Activated B cell treated with CpG ODN at 0.5 μM for 24 hours (primary cell): ENCODE measurements at regions of chr2 and their contacts with region 1.

Region 1: GRCh38 chr2:168160897-168161296 is 86.5 kb downstream of the STK39 start:
- DNase-seq: no peak
- ATAC-seq: peak; percentile 40
- H3K4me3 Mint-ChIP-seq: no peak overlapping the region
- H3K27ac Mint-ChIP-seq: no peak overlapping the region
- H3K4me1 Mint-ChIP-seq: peaks cover 9% of the 10 kb centered on the region
- H3K27me3 Mint-ChIP-seq: no peaks in the 10 kb centered on the region
- CTCF ChIP-seq: no peak

Region 2: GRCh38 chr2:168138374-168138773 is 22.5 kb before region 1 on chr2:
- CTCF ChIA-PET with region 1: no interaction called
- POLR2A ChIA-PET with region 1: no interaction called
- intact Hi-C with region 1: no loop called
- DNase-seq: no peak
- ATAC-seq: no peak
- H3K4me3 Mint-ChIP-seq: no peak overlapping the region
- H3K27ac Mint-ChIP-seq: no peak overlapping the region
- H3K4me1 Mint-ChIP-seq: peaks cover 24% of the 10 kb centered on the region
- H3K27me3 Mint-ChIP-seq: no peaks in the 10 kb centered on the region
- CTCF ChIP-seq: no peak

Region 3: DNA sequence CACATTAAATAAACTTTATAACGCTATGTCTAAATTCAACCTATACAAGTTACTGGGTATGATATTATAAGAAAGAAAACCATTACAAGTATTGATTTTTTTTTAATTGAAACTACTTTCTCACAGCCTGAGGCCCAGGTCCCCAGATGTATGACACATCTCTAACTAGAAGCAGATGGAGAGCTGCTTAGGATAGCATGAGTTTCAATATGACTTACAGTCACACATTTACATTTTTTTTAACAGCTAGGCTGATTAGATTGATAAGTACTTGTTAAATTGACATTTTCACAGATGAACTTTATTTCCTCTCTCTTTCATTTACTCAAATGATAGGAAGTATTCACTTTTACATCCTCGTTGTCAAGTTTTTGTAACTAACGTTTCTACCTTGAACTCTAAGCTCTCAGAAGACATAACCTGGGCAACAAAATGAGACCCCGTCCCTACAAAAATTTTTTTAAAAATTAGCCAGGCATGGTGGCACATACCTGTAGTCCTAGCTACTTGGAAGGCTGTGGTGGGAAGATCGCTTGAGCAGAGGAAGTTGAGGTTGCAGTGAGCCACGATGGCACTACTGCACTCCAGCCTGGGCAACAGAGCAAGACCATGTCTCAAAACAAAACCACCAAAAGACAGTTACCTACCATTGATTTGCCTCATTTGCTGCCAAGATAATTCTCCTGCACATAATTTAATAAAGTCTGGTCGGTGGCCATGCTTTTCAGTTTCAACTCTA is 34.1 kb after region 1 on chr2:
- CTCF ChIA-PET with region 1: no interaction called
- POLR2A ChIA-PET with region 1: no interaction called
- intact Hi-C with region 1: loop called (anchors 2 kb)
- DNase-seq: peak; percentile 33
- ATAC-seq: peak; percentile 84
- H3K4me3 Mint-ChIP-seq: peak overlapping the region; percentile 79
- H3K27ac Mint-ChIP-seq: peak overlapping the region; percentile 97
- H3K4me1 Mint-ChIP-seq: peaks cover 53% of the 10 kb centered on the region
- H3K27me3 Mint-ChIP-seq: no peaks in the 10 kb centered on the region
- CTCF ChIP-seq: no peak

Region 4: DNA sequence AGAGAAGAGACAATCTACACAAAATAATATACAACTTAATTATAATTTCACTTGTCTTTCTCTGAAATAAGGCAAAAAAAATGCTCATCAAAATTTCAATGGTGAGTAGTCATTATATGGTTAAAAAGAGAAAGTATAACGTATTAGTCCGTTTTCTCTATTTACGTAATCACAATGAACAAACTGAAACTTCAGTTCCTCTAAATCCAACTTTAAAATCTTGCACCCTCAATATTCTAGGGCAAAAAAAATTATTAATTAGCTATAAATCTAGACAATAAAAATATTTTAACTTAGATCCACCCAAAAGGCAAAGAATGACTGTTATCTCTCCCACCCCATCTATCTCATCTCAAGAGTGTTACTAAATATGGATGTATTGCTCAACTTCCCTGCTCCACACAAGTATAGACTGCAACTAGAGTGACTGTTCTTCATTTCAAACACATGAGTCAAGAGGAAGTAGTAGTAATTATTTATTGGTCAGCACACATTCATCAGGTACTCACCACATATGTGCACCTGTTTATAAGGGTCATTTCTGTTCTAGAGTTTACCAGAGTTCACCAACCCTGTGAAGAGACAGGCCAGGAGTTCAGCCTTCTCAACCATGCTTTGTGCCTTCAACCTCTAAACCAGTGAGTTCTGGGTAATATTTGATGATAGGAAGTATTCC is 50.1 kb after region 1 on chr2:
- CTCF ChIA-PET with region 1: no interaction called
- POLR2A ChIA-PET with region 1: interaction called, 5 read pairs
- intact Hi-C with region 1: loop called (anchors 1 kb)
- DNase-seq: no peak
- ATAC-seq: peak; percentile 65
- H3K4me3 Mint-ChIP-seq: peak overlapping the region; percentile 60
- H3K27ac Mint-ChIP-seq: peak overlapping the region; percentile 87
- H3K4me1 Mint-ChIP-seq: peaks cover 55% of the 10 kb centered on the region
- H3K27me3 Mint-ChIP-seq: no peaks in the 10 kb centered on the region
- CTCF ChIP-seq: no peak

Region 5: DNA sequence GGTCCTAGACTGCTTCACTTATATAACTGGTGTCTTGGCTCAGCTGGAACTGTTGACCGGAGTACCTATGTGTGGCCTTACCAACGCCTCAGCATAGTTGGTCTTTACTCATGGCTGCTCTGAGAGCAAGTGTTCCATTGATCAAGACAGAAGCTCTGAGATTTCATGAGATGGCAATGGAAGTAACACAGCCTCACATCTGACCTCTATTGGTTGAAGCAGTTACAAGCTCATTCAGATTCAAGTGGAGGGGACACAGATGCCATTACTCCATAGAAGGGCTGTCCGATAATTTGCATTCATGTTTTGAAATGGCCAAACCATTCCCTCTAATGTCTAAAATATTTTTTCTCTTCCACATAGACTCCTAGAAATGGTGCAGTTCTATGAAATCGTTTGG is 132.9 kb after region 1 on chr2:
- CTCF ChIA-PET with region 1: interaction called, 9 read pairs
- POLR2A ChIA-PET with region 1: no interaction called
- intact Hi-C with region 1: loop called (anchors 5 kb)
- DNase-seq: no peak
- ATAC-seq: no peak
- H3K4me3 Mint-ChIP-seq: no peak overlapping the region
- H3K27ac Mint-ChIP-seq: no peak overlapping the region
- H3K4me1 Mint-ChIP-seq: no peaks in the 10 kb centered on the region
- H3K27me3 Mint-ChIP-seq: no peaks in the 10 kb centered on the region
- CTCF ChIP-seq: no peak

Region 6: DNA sequence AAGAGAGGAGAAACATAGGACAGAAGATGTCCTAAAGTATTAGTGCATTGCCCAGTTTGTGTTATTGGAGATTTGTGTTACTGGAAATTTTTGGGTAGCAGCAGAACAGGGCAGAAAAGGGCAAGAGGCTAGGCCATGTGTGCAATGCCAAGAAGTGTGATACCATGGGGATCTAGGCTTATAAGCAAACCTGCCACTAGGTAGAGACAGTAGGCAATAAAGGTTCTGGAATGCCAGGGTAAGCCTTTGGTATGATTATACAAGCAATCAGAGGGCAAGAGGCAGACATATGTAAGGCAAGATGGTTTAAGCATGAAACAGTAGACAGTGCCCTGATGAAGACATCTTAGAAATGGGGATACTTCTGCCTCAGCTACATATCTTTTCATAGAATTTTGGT is 282.9 kb after region 1 on chr2:
- CTCF ChIA-PET with region 1: no interaction called
- POLR2A ChIA-PET with region 1: no interaction called
- intact Hi-C with region 1: no loop called
- DNase-seq: no peak
- ATAC-seq: peak; percentile 34
- H3K4me3 Mint-ChIP-seq: no peak overlapping the region
- H3K27ac Mint-ChIP-seq: no peak overlapping the region
- H3K4me1 Mint-ChIP-seq: no peaks in the 10 kb centered on the region
- H3K27me3 Mint-ChIP-seq: no peaks in the 10 kb centered on the region
- CTCF ChIP-seq: no peak